Left cardiac atrium (tissue), 4 donors: ENCODE measurements at regions of chr9 and their contacts with region 1.

Region 1: DNA sequence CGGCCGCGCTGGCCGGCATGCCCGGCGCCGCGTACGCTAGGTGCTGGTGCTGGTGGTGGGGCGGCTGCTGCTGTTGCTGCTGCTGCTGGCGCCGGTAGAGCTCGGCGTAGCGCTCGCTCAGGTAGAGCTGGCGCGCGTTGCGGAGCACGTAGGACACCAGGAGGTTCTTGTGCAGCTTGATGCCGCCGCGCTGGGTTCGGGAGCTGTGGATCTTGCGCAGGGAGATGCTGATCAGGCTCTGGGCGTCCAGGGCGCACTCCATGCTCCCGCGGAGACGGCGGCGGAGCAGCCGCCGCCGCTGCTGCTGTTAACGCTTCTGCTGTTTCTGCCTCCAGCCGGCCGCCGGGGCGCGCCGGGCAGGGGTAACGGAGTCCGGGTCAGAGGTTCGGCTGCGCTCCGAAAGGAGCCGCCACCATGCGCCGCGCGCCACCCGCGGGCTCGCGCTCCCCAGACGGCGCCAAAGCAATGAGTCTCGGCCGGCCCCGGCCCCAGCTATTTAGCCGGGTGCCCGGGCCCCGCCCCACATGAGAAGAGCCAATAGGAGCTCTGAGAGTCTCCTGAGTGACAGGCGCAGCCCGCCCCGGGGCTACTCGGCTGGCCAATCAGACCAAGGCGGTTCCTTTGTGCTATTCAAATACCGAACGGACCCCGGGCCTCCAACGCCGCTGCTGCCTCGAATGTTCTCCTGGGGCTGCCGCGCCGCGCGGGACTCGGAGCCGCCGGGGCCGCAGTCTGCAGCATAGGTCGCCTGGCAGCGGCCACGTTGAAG is at the start of gene IER5L:
- DNase-seq: peak; percentile 96
- ATAC-seq: peak; percentile 82 to 86
- total RNA-seq, gene IER5L: 5.4 to 13.1 TPM

Region 2: DNA sequence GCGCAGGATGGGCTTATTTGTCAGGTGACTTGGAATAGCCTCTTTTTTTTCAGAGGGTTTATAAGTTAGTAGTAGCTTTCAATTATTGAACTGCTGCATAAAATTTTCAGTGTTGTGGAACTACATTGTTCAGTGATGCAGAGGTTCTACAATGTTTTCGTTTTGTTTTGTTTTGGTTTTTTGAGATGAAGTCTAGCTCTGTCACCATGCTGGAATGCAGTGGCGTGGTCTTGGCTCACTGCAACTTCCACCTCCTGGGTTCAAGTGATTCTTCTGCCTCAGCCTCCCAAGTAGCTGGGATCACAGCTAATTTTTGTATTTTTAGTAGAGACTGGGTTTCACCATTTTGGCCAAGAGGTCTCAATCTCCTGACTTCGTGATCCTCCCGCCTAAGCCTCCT is 208.5 kb before region 1 on chr9:
- intact Hi-C with region 1: no loop called
- DNase-seq: no peak
- ATAC-seq: no peak

Region 3: DNA sequence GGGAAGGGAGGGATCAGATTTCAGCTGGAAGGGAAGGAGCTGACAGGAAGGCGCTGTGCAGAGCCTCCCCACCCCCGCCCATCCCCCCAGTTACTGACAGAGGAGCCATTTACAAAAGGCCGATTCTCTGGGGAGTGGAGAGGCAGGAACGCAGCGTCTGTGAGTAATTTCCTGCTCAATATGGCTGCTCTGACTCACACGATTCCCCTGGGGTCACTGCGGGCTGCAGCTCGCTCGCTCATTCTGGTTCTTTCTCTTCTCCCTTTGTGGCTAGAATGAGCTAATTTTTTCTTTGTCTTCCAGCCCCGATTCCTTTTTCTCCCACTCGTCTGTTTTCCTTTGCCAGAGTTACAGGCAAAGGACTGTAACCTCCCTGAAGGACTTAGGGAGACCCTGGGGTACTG is 38.0 kb before region 1 on chr9:
- intact Hi-C with region 1: loop called in 1 of 2 experiments (anchors 2 kb)
- DNase-seq: peak; percentile 96
- ATAC-seq: peak; percentile 77 to 85

Region 4: DNA sequence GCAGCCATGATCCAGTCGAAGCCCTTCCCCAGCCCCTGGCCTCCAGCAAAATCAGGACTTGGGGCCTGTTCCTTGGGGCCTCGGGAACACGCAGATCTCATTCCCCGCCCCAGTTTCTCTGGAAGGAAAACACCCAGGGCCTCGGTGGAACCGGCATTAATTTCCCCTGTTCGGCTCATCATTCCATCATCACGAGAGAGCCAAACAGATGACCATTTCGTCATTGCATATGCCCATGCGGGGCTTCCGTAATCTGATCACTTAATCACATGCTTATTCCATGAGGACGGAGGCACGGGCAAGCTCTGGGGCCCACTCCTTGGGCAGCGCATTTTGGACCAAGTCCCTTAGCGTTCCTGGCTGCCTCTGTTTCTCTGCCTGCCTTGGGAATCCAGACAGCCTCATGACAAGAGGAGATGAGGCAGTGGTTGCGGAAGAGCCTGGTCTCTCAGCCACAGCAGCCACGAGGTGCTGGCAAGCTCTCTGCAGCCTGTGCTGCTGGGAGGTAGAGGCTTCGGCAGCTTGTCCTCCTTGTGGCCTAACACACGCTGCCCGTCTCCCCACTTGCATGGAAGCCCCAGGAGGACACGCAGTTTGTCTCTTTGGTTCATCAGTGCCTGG is 65.1 kb after region 1 on chr9:
- intact Hi-C with region 1: no loop called
- DNase-seq: peak; percentile 43
- ATAC-seq: peak; percentile 23 to 87

Region 5: DNA sequence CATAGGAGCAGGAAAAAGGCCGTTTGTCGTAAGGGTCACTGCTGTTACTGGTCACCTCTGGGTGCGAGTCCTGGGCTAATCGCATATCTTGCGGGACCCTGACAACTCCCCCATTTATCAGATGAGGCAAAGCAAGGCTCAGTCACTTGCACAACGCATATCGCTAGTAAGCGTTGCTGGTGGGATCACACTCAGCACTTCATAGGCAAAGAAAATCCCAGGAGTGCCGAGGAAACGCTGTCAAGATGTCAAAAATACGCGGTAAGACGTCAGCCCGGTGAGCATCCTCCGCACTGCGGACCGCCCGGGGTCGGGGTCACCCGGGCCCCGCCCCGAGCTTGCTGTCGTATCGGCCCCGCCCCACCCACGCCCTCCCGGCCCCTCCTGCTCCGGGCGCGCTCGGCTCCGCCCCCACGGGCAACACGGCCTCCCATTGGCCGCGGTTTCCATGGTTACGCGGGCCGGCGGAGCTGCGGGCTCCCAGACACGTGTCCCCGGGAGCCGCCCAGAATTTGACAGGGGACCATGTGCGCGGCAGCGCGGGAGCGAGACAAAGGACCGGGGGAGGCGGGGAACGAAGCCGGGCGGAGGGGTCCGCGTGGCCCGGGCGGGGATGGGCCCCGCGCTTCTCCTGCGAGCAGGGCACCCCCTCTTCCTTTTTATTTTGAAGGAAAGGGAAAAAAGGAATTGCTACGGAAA is 80.3 kb after region 1 on chr9:
- intact Hi-C with region 1: loop called in 1 of 2 experiments (anchors 10 kb)
- DNase-seq: peak; percentile 96
- ATAC-seq: peak; percentile 90 to 93

Region 6: GRCh38 chr9:129320575-129321263 is 142.7 kb after region 1 on chr9:
- intact Hi-C with region 1: loop called in 1 of 2 experiments (anchors 10 kb)
- DNase-seq: peak; percentile 67
- ATAC-seq: peak; percentile 76 to 85

Region 7: DNA sequence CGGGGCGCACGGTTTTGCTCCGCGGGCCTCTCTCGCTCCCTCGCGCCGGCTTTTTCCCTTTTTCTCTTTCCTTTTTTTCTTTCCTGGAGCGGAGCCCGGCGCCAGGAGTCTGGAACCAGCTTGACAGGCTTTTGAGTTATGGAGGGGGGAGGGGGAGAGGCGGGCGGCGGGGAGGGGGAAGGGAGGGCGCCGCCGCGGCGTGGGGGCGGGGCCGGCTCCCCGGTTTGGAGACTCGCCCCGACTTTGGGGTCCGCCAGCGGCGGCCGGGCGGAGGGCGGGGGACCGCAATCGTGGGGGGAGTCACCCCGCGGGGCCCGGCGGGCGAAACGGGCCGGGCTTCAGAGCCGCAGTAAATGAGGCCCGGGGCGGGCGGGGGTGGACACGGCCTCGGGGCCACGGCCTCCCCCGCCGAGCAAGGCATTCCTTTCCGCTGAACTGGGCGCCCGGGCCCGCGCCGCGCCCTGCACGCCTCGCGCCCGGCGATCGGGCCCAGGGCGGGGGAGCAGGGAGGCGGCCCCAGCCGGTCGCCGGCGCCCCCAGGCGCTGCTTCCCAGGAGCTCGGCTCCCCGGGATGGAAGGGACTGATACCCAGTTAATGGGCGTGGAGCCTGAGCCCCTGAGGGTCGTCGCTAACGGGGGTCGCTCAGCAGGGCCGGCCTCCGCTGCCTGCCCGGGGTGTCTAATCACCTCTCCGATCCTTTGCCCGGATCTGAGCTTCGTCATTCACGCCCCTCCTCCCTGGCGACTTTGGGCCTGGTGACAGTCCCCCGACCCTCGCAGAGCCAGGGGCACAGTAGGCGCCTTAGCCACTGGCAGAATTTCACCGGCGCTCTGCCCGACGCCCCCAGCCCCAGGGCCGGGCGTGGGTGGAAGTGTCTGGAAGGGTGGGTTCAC is 304.8 kb after region 1 on chr9:
- intact Hi-C with region 1: loop called in 1 of 2 experiments (anchors 10 kb)
- DNase-seq: peak; percentile 88
- ATAC-seq: peak; percentile 79 to 82

Region 8: DNA sequence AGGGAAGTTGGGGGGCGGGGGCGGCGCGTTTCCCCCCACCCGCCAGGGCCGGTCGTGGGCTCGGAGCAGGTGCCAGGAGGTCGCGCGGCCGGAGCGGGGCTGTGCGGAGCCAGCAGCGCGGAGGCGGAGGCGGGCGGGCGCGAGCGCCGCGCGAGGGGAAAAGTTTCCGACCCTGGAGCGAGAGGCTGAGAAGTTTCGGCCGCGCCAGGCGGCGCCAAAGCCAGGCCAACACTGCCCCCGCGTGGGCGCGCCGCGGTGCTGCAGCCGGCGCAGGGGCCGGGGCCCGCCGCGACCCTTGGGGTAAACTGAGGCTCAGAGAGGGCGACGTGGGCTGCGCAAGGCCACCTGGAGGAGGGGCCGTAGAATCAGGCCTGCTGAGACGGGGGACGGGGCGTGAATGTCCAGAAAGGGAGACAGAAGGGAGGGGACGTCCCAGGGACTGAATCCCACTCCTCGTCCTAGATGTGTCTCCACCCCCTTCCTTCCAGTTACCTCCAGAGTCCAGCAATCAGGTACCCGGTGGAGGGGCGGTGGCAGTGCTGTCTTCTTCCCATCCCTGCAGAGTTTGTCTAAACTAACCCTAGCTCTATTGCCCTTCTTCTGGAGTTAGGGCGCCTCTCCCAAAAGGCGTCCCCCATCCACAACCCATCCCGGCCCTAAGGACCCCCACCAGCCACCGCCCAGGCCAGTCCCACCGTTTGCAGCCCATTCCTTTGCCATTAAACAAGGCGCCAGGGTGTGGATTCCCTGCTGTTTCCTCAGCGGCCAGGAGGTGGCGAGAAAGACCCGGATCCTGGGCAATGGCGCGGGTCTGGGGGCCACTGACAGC is 432.7 kb after region 1 on chr9:
- intact Hi-C with region 1: loop called (anchors 2 to 10 kb)
- DNase-seq: peak; percentile 82
- ATAC-seq: peak; percentile 57 to 75